ENCODE measurements at regions of chr11 and their contacts with region 1.

Region 1: DNA sequence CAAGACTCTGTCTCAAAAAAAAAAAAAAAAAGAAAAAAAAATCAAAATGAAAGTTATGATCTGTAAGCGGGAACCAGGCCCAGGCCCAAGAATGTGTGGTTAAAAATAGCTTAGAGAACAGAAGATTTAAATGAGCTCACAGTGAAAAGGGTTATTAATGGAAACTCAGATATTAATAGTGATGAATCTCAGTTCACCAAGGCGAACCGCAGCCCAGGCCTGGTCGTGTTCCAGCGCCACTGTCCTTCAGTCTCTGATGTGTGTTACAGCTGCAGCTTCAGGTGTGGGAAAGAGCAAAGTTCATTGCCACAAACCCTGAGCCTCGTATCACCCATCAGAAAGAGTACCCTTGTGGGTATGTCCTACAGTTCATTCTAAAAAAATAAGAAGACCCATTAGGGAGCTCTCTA is 107.1 kb downstream of the GAB2 start:
- DNase-seq: no peak
- H3K4me3 ChIP-seq: no peak overlapping the region
- H3K27ac ChIP-seq: no peak overlapping the region
- H3K4me1 ChIP-seq: no peaks in the 10 kb centered on the region
- H3K27me3 ChIP-seq: no peaks in the 10 kb centered on the region
- CTCF ChIP-seq: no peak
- POLR2A ChIP-seq: no peak

Region 2: GRCh38 chr11:78349624-78350023 is 39.1 kb after region 1 on chr11:
- intact Hi-C with region 1: loop called (anchors 5 kb)
- DNase-seq: no peak
- H3K4me3 ChIP-seq: no peak overlapping the region
- H3K27ac ChIP-seq: peak overlapping the region; percentile 23 to 55
- H3K4me1 ChIP-seq: no peaks in the 10 kb centered on the region
- H3K27me3 ChIP-seq: no peaks in the 10 kb centered on the region
- CTCF ChIP-seq: no peak
- POLR2A ChIP-seq: no peak